CD4-positive, alpha-beta T cell (primary cell): ENCODE measurements at regions of chrX and their contacts with region 1.

Region 1: GRCh38 chrX:13029341-13029740 is 15.1 kb downstream of the FAM9C start:
- DNase-seq: peak in 7 of 14 experiments; percentile 9 to 56 (median 40)
- ATAC-seq: peak; percentile 42
- H3K4me3 ChIP-seq: no peak overlapping the region
- H3K4me3 Mint-ChIP-seq: peak overlapping the region; percentile 70
- H3K27ac ChIP-seq: peak overlapping the region; percentile 19 to 52
- H3K27ac Mint-ChIP-seq: peak overlapping the region; percentile 98
- H3K4me1 ChIP-seq: peaks cover 53% of the 10 kb centered on the region
- H3K4me1 Mint-ChIP-seq: peaks cover 83% of the 10 kb centered on the region
- H3K27me3 ChIP-seq: no peaks in the 10 kb centered on the region
- H3K27me3 Mint-ChIP-seq: no peaks in the 10 kb centered on the region
- CTCF ChIP-seq: no peak

Region 2: DNA sequence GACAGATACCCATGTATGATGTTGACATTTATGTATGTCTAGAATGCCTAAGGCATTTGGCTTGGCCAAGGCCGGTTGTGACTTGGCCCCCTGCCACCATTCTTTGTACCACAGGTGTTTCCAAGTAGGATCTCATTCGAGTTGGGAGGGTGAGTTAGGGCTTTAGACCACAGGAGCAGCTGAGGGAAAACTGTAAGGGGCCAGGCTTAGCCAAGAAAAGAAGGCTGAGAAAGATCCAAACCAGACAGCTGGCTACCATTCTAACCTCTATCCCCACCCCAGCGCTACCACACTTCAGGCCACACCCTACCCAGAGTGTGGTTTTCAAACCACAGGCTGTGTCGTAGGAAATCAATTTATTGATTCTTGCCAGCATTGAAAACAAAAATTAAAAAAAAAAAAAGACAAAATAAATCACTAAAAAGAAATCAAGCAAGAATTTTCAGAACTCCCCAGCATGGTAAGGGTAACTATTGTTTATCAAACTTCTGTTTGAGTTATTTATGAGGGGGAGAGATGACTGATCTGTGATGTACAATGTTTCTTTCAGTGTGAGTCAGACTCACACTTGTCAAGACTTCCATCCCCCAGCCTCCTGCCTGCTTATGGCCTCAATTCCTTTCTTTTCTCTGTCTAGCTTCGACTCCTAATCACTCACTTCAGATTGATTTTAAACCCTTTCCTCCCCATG is 44.6 kb before region 1 on chrX:
- CTCF ChIA-PET with region 1: no interaction called
- POLR2A ChIA-PET with region 1: interaction called, 184 read pairs
- intact Hi-C with region 1: loop called in 1 of 2 experiments (anchors 5 kb)
- DNase-seq: peak in 10 of 14 experiments; percentile 35 to 80 (median 52)
- ATAC-seq: peak; percentile 77
- H3K4me3 ChIP-seq: peak overlapping the region; percentile 12
- H3K4me3 Mint-ChIP-seq: peak overlapping the region; percentile 82
- H3K27ac ChIP-seq: peak overlapping the region; percentile 66 to 69
- H3K27ac Mint-ChIP-seq: peak overlapping the region; percentile 95
- H3K4me1 ChIP-seq: peaks cover 80% of the 10 kb centered on the region
- H3K4me1 Mint-ChIP-seq: peaks cover 76% of the 10 kb centered on the region
- H3K27me3 ChIP-seq: no peaks in the 10 kb centered on the region
- H3K27me3 Mint-ChIP-seq: no peaks in the 10 kb centered on the region
- CTCF ChIP-seq: no peak

Region 3: GRCh38 chrX:13000301-13000811 is 29.0 kb before region 1 on chrX:
- CTCF ChIA-PET with region 1: no interaction called
- POLR2A ChIA-PET with region 1: interaction called, 10 read pairs
- intact Hi-C with region 1: loop called in 1 of 2 experiments (anchors 5 kb)
- DNase-seq: peak in 7 of 14 experiments; percentile 35 to 76 (median 60)
- ATAC-seq: peak; percentile 47
- H3K4me3 ChIP-seq: peak overlapping the region; percentile 37
- H3K4me3 Mint-ChIP-seq: peak overlapping the region; percentile 89
- H3K27ac ChIP-seq: peak overlapping the region; percentile 72 to 85
- H3K27ac Mint-ChIP-seq: peak overlapping the region; percentile 90
- H3K4me1 ChIP-seq: peaks cover 56% of the 10 kb centered on the region
- H3K4me1 Mint-ChIP-seq: peaks cover 83% of the 10 kb centered on the region
- H3K27me3 ChIP-seq: no peaks in the 10 kb centered on the region
- H3K27me3 Mint-ChIP-seq: no peaks in the 10 kb centered on the region
- CTCF ChIP-seq: no peak

Region 4: DNA sequence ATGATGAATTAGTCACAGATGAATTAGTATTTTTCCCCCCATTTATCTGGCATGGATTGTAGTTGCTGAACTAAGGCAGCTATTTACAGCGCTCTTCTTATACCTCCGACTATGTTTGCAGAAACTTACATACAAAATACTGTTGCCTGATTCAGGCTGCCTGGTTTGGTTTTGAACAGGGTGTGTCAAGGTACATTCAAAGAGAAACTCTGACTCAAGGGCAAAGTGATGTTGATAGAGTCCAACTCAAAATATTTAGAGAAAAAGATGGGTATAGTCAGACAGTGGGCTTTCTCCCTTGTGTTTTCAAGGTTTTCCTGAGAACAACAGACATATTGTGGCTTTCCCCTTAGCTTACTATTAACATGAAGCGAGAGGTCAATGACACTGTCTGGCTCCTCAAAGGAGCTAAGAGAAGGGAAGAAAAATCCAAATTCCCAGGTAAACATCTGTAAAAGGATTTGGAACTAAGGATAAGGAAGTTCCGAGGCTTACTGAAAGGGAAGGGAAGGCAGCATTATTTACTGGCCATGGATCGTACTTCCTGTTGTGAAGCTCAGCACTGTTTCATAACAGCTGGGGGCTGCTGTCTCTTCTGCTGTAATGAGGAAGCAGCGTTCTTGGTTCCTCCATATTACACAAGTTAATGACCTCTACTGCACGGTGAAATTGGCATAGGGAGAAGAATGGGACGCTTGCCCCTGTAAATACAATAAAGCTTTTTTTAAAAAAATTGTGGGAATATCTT is 15.8 kb before region 1 on chrX:
- CTCF ChIA-PET with region 1: no interaction called
- POLR2A ChIA-PET with region 1: interaction called, 12 read pairs
- intact Hi-C with region 1: no loop called
- DNase-seq: peak in 7 of 14 experiments; percentile 8 to 66 (median 43)
- ATAC-seq: peak; percentile 84
- H3K4me3 ChIP-seq: peak overlapping the region; percentile 9
- H3K4me3 Mint-ChIP-seq: peak overlapping the region; percentile 68
- H3K27ac ChIP-seq: peak overlapping the region; percentile 63 to 66
- H3K27ac Mint-ChIP-seq: peak overlapping the region; percentile 88
- H3K4me1 ChIP-seq: peaks cover 45% of the 10 kb centered on the region
- H3K4me1 Mint-ChIP-seq: peaks cover 76% of the 10 kb centered on the region
- H3K27me3 ChIP-seq: no peaks in the 10 kb centered on the region
- H3K27me3 Mint-ChIP-seq: no peaks in the 10 kb centered on the region
- CTCF ChIP-seq: no peak

Region 5: GRCh38 chrX:13046141-13046855 is 17.0 kb after region 1 on chrX:
- CTCF ChIA-PET with region 1: interaction called, 8 read pairs
- POLR2A ChIA-PET with region 1: interaction called, 85 read pairs
- intact Hi-C with region 1: loop called in 1 of 2 experiments (anchors 1 kb)
- DNase-seq: no peak
- ATAC-seq: no peak
- H3K4me3 ChIP-seq: no peak overlapping the region
- H3K4me3 Mint-ChIP-seq: no peak overlapping the region
- H3K27ac ChIP-seq: no peak overlapping the region
- H3K27ac Mint-ChIP-seq: peak overlapping the region; percentile 83
- H3K4me1 ChIP-seq: peaks cover 37% of the 10 kb centered on the region
- H3K4me1 Mint-ChIP-seq: peaks cover 63% of the 10 kb centered on the region
- H3K27me3 ChIP-seq: no peaks in the 10 kb centered on the region
- H3K27me3 Mint-ChIP-seq: no peaks in the 10 kb centered on the region
- CTCF ChIP-seq: no peak

Region 6: GRCh38 chrX:13078739-13079444 is 49.6 kb after region 1 on chrX:
- CTCF ChIA-PET with region 1: no interaction called
- POLR2A ChIA-PET with region 1: interaction called, 91 read pairs
- intact Hi-C with region 1: no loop called
- DNase-seq: peak in 4 of 14 experiments; percentile 34 to 56 (median 48)
- ATAC-seq: no peak
- H3K4me3 ChIP-seq: peak overlapping the region; percentile 28
- H3K4me3 Mint-ChIP-seq: peak overlapping the region; percentile 62
- H3K27ac ChIP-seq: peak overlapping the region; percentile 62
- H3K27ac Mint-ChIP-seq: peak overlapping the region; percentile 95
- H3K4me1 ChIP-seq: peaks cover 76% of the 10 kb centered on the region
- H3K4me1 Mint-ChIP-seq: peaks cover 96% of the 10 kb centered on the region
- H3K27me3 ChIP-seq: no peaks in the 10 kb centered on the region
- H3K27me3 Mint-ChIP-seq: no peaks in the 10 kb centered on the region
- CTCF ChIP-seq: no peak